ENCODE measurements at regions of chr22 and their contacts with region 1.

Region 1: GRCh38 chr22:23772649-23773495 is at the start of gene MMP11:
- DNase-seq: peak; percentile 81
- ATAC-seq: peak; percentile 52
- H3K4me3 ChIP-seq: peak within 1 kb of the TSS; percentile 50
- H3K27ac ChIP-seq: no peak within 1 kb of the TSS
- H3K4me1 ChIP-seq: peaks cover 20% of the 10 kb centered on the region
- H3K27me3 ChIP-seq: no peaks in the 10 kb centered on the region
- CTCF ChIP-seq: no peak
- total RNA-seq, gene MMP11: 1.9 TPM

Region 2: GRCh38 chr22:23849009-23850006 is 76.4 kb after region 1 on chr22:
- intact Hi-C with region 1: loop called (anchors 10 kb)
- DNase-seq: peak; percentile 92
- ATAC-seq: peak; percentile 94
- H3K4me3 ChIP-seq: no peak overlapping the region
- H3K27ac ChIP-seq: no peak overlapping the region
- H3K4me1 ChIP-seq: peaks cover 18% of the 10 kb centered on the region
- H3K27me3 ChIP-seq: peaks cover 7% of the 10 kb centered on the region
- CTCF ChIP-seq: peak; percentile 99

Region 3: GRCh38 chr22:23868580-23868979 is 95.7 kb after region 1 on chr22:
- intact Hi-C with region 1: no loop called
- DNase-seq: no peak
- ATAC-seq: peak; percentile 53
- H3K4me3 ChIP-seq: no peak overlapping the region
- H3K27ac ChIP-seq: no peak overlapping the region
- H3K4me1 ChIP-seq: no peaks in the 10 kb centered on the region
- H3K27me3 ChIP-seq: no peaks in the 10 kb centered on the region
- CTCF ChIP-seq: no peak